Adrenal gland (tissue), 19 donors: ENCODE measurements at regions of chr12 and their contacts with region 1.

Region 1: DNA sequence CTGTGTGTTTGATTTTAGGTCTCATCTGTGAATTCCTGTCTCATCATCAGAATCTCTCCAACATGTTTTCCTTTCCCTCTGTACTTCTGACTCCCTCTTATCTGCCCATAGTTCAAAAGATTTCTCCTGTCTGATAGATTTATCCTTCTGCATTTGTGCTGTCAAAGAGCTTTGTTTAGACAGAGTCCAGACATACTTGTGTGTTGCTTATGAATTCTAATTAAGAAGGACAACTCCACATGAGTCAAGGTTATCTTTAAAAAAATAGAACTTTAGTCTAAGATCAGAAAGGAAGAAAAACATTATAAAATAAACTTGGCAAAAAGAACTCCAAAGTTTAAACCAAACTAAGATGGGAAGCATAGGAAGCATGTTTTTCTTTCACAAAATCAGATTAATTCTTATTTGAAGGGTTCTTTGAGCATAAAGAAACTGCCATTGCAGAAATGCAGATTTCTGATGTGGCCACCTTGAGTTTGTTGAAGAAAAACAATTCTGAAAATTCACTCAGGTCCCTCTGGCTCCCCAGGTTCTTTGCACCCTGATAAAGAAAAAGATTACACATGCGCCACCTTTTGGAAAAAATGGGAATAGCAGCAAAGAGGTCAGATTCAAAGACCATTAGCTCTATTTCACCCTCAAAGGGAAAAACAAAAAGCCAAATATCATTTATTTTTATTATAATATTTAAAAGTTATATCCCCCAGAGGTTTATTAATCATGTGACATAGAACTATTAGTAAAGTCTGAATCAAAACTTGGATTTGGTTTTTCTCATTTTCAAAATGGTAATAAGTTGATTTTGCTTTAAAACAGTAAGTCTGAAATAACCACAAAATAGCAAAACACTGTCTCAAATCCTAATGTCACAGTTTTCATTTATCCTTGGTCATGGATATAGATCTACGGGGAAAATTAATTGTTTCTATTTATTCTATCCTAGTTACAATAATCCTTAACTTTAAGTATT is 143.7 kb upstream of the DCN start:
- DNase-seq: peak; percentile 34 to 72 (median 55)
- H3K4me3 ChIP-seq: no peak overlapping the region
- H3K27ac ChIP-seq: no peak overlapping the region
- H3K4me1 ChIP-seq: no peaks in the 10 kb centered on the region
- H3K27me3 ChIP-seq: no peaks in the 10 kb centered on the region
- CTCF ChIP-seq: peak; percentile 46 to 82 (median 68)
- POLR2A ChIP-seq: no peak

Region 2: DNA sequence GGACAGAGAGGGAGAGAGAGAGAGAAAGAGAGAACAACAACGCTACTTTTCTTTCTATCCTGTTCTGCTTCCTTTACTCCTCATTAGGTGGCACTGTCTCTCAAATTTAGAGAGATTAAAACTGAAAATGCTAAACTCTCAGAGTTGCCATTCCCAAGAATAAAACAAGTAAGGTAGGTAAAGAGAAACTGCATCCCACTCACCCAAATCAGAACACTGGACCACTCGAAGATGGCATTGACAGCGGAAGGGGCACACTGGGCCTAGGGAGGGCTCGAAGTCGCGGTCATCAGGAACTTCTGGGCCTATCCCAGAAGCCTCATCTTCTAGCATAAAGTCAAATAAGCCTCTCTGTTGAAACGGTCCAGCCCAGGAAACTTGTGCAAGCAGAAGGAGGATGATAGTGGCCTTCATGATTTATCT is 148.2 kb before region 1 on chr12:
- intact Hi-C with region 1: loop called in 1 of 2 experiments (anchors 5 kb)
- DNase-seq: peak in 4 of 7 donors; percentile 16 to 31 (median 31)
- H3K4me3 ChIP-seq: peak overlapping the region in 1 of 4 donors; percentile 57
- H3K27ac ChIP-seq: peak overlapping the region in 3 of 5 donors; percentile 55 to 79 (median 76)
- H3K4me1 ChIP-seq: no peaks in the 10 kb centered on the region
- H3K27me3 ChIP-seq: no peaks in the 10 kb centered on the region
- CTCF ChIP-seq: peak; percentile 25 to 65 (median 52)
- POLR2A ChIP-seq: no peak